ENCODE measurements at regions of chr13 and their contacts with region 1.

Region 1: GRCh38 chr13:29472332-29472961 is 123.0 kb downstream of the SLC7A1 start:
- DNase-seq: peak; percentile 72
- ATAC-seq: peak; percentile 67
- H3K4me3 ChIP-seq: no peak overlapping the region
- H3K4me3 Mint-ChIP-seq: no peak overlapping the region
- H3K27ac ChIP-seq: no peak overlapping the region
- H3K27ac Mint-ChIP-seq: no peak overlapping the region
- H3K4me1 ChIP-seq: peaks cover 4 to 9% of the 10 kb centered on the region in 2 donors
- H3K4me1 Mint-ChIP-seq: peaks cover 2% of the 10 kb centered on the region
- H3K27me3 ChIP-seq: no peaks in the 10 kb centered on the region
- H3K27me3 Mint-ChIP-seq: peaks cover 4% of the 10 kb centered on the region
- CTCF ChIP-seq: peak; percentile 99

Region 2: DNA sequence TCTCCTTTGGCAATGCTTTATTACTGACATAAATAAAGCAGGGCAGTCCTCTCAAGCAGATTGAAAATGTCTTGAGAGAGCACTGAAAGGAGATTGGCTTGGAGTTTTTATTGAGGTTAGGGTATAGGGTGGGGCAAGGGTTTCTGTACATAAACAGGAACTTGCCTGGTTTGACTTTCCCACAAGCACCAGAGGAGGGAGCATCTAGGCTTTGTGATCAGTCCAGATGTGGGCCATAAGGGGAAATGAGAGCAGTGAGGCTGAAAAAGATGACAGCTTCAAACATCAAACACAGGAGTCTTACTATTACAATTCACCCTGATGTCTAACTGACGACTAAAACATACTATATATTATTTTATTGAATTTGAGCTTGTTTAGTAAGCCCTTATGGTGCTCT is 391.4 kb before region 1 on chr13:
- CTCF ChIA-PET with region 1: no interaction called
- POLR2A ChIA-PET with region 1: no interaction called
- intact Hi-C with region 1: loop called (anchors 5 kb)
- DNase-seq: peak; percentile 81
- ATAC-seq: peak; percentile 88
- H3K4me3 ChIP-seq: no peak overlapping the region
- H3K4me3 Mint-ChIP-seq: peak overlapping the region; percentile 10
- H3K27ac ChIP-seq: peak overlapping the region; percentile 20 to 22
- H3K27ac Mint-ChIP-seq: peak overlapping the region; percentile 44
- H3K4me1 ChIP-seq: peaks cover 17 to 19% of the 10 kb centered on the region in 2 donors
- H3K4me1 Mint-ChIP-seq: peaks cover 22% of the 10 kb centered on the region
- H3K27me3 ChIP-seq: peaks cover 0 to 3% (median 0%) of the 10 kb centered on the region in 4 experiments
- H3K27me3 Mint-ChIP-seq: peaks cover 9% of the 10 kb centered on the region
- CTCF ChIP-seq: no peak

Region 3: GRCh38 chr13:29359181-29359580 is 113.3 kb before region 1 on chr13:
- CTCF ChIA-PET with region 1: no interaction called
- POLR2A ChIA-PET with region 1: no interaction called
- intact Hi-C with region 1: no loop called
- DNase-seq: no peak
- ATAC-seq: no peak
- H3K4me3 ChIP-seq: no peak overlapping the region
- H3K4me3 Mint-ChIP-seq: no peak overlapping the region
- H3K27ac ChIP-seq: no peak overlapping the region
- H3K27ac Mint-ChIP-seq: no peak overlapping the region
- H3K4me1 ChIP-seq: peaks cover 0 to 4% of the 10 kb centered on the region in 2 donors
- H3K4me1 Mint-ChIP-seq: peaks cover 2% of the 10 kb centered on the region
- H3K27me3 ChIP-seq: peaks cover 0 to 9% (median 4%) of the 10 kb centered on the region in 4 experiments
- H3K27me3 Mint-ChIP-seq: peaks cover 37% of the 10 kb centered on the region
- CTCF ChIP-seq: no peak

Region 4: DNA sequence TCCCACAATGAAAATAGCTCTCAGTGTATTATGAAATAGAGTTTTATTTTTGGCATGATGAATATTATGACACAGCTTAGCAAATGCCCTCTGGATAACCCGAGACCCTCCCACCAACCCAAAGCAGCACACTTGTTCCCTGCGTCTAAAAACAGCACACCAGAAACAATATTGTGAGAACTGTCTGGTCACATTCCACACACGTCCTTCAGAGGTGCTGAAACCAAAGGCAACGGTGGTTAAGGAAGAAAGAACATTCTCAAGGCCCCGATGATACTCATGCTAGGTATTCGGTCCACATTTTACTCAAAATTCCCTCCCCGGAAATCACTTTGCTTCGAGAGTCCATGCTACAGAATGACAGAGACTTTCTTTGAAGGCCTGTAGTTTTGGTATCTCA is 33.7 kb before region 1 on chr13:
- CTCF ChIA-PET with region 1: no interaction called
- POLR2A ChIA-PET with region 1: no interaction called
- intact Hi-C with region 1: no loop called
- DNase-seq: no peak
- ATAC-seq: no peak
- H3K4me3 ChIP-seq: no peak overlapping the region
- H3K4me3 Mint-ChIP-seq: no peak overlapping the region
- H3K27ac ChIP-seq: no peak overlapping the region
- H3K27ac Mint-ChIP-seq: no peak overlapping the region
- H3K4me1 ChIP-seq: peaks cover 12 to 19% of the 10 kb centered on the region in 2 donors
- H3K4me1 Mint-ChIP-seq: peaks cover 11% of the 10 kb centered on the region
- H3K27me3 ChIP-seq: peaks cover 0 to 6% (median 2%) of the 10 kb centered on the region in 4 experiments
- H3K27me3 Mint-ChIP-seq: peaks cover 15% of the 10 kb centered on the region
- CTCF ChIP-seq: no peak

Region 5: DNA sequence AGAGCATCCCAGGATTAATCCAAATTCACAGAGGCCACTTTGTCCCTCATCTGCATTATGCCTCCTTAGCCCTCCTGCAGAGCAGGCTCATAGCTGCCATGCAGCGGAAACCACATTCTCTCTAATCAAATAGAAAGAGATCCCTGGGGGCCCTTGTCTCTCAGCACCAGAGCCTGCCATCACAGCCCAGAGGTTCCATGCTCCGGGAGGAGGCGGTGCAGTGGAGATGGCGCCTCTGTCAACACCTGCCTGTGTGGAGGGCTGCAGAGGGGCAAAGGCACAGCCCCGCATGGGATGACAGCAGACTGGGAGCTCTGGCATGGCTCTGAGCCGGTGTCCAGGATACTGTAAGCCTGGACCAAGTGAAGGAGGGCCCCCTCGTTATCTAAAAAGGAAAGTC is 11.8 kb after region 1 on chr13:
- CTCF ChIA-PET with region 1: interaction called, 16 read pairs
- POLR2A ChIA-PET with region 1: no interaction called
- intact Hi-C with region 1: no loop called
- DNase-seq: peak; percentile 34
- ATAC-seq: peak; percentile 73
- H3K4me3 ChIP-seq: no peak overlapping the region
- H3K4me3 Mint-ChIP-seq: peak overlapping the region; percentile 52
- H3K27ac ChIP-seq: no peak overlapping the region
- H3K27ac Mint-ChIP-seq: no peak overlapping the region
- H3K4me1 ChIP-seq: peaks cover 10 to 19% of the 10 kb centered on the region in 2 donors
- H3K4me1 Mint-ChIP-seq: peaks cover 14% of the 10 kb centered on the region
- H3K27me3 ChIP-seq: peaks cover 0 to 5% (median 1%) of the 10 kb centered on the region in 4 experiments
- H3K27me3 Mint-ChIP-seq: peaks cover 28% of the 10 kb centered on the region
- CTCF ChIP-seq: no peak

Region 6: DNA sequence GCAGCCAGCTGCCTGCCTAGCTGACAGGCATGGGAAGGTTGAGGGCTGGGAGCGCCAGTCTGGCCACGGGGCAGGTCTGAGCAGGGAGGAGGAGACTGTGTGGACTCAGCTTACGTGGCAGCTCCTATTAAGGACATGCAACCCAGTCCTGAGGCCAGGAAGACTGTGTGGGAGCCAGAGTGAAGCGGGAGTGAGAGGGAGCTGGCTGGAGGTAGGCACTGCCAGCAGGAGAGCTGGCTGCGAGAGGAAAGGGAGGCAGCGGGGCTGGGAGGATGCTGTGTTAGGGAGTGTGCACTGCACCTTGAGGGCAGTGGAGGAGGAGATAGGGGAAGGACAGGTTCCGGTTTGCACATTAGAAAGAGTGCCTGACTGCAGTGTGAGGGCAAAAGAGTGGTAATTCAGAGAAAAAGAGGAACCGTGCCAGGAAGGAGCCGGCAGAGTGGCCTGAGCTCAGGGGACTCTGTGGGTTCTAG is 23.8 kb after region 1 on chr13:
- CTCF ChIA-PET with region 1: interaction called, 17 read pairs
- POLR2A ChIA-PET with region 1: no interaction called
- intact Hi-C with region 1: loop called (anchors 2 kb)
- DNase-seq: peak; percentile 78
- ATAC-seq: peak; percentile 68
- H3K4me3 ChIP-seq: peak overlapping the region in 4 of 5 experiments; percentile 14 to 48 (median 26)
- H3K4me3 Mint-ChIP-seq: peak overlapping the region; percentile 86
- H3K27ac ChIP-seq: peak overlapping the region; percentile 46 to 47
- H3K27ac Mint-ChIP-seq: peak overlapping the region; percentile 80
- H3K4me1 ChIP-seq: peaks cover 36 to 39% of the 10 kb centered on the region in 2 donors
- H3K4me1 Mint-ChIP-seq: peaks cover 36% of the 10 kb centered on the region
- H3K27me3 ChIP-seq: no peaks in the 10 kb centered on the region
- H3K27me3 Mint-ChIP-seq: no peaks in the 10 kb centered on the region
- CTCF ChIP-seq: no peak

Region 7: GRCh38 chr13:29503041-29503837 is 30.8 kb after region 1 on chr13:
- CTCF ChIA-PET with region 1: interaction called, 17 read pairs
- POLR2A ChIA-PET with region 1: no interaction called
- intact Hi-C with region 1: no loop called
- DNase-seq: no peak
- ATAC-seq: no peak
- H3K4me3 ChIP-seq: no peak overlapping the region
- H3K4me3 Mint-ChIP-seq: no peak overlapping the region
- H3K27ac ChIP-seq: no peak overlapping the region
- H3K27ac Mint-ChIP-seq: no peak overlapping the region
- H3K4me1 ChIP-seq: peaks cover 0 to 4% of the 10 kb centered on the region in 2 donors
- H3K4me1 Mint-ChIP-seq: peaks cover 8% of the 10 kb centered on the region
- H3K27me3 ChIP-seq: peaks cover 0 to 25% (median 9%) of the 10 kb centered on the region in 4 experiments
- H3K27me3 Mint-ChIP-seq: peaks cover 31% of the 10 kb centered on the region
- CTCF ChIP-seq: no peak

Region 8: GRCh38 chr13:30253830-30254229 is 781.4 kb after region 1 on chr13:
- CTCF ChIA-PET with region 1: no interaction called
- POLR2A ChIA-PET with region 1: no interaction called
- intact Hi-C with region 1: no loop called
- DNase-seq: no peak
- ATAC-seq: no peak
- H3K4me3 ChIP-seq: no peak overlapping the region
- H3K4me3 Mint-ChIP-seq: peak overlapping the region; percentile 57
- H3K27ac ChIP-seq: no peak overlapping the region
- H3K27ac Mint-ChIP-seq: peak overlapping the region; percentile 32
- H3K4me1 ChIP-seq: peaks cover 5 to 6% of the 10 kb centered on the region in 2 donors
- H3K4me1 Mint-ChIP-seq: peaks cover 13% of the 10 kb centered on the region
- H3K27me3 ChIP-seq: no peaks in the 10 kb centered on the region
- H3K27me3 Mint-ChIP-seq: no peaks in the 10 kb centered on the region
- CTCF ChIP-seq: no peak

Measured in B cell (primary cell).